Uterus (tissue), 4 donors: ENCODE measurements at regions of chr2 and their contacts with region 1.

Region 1: DNA sequence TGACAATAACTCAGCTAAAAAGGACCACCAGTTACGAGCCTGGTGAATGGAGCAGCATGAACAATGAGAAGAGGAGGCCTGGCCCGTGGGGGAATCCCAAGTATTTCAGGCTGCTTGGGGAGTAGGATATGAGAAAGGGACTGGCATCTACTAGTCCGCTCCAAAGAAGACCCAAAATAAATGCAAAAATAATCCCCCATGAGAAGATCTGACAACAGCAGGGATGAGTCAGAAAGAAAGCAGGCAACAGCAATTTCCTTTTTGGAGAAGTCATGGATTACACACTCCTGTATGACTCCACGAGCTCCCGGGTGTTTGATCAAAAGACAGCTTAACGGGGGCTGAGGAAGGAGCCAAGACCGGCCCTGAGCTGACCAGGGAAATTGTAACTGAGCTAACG is 111.4 kb downstream of the SOX11 start:
- DNase-seq: no peak
- H3K4me3 ChIP-seq: no peak overlapping the region
- H3K27ac ChIP-seq: no peak overlapping the region
- H3K4me1 ChIP-seq: no peaks in the 10 kb centered on the region
- H3K27me3 ChIP-seq: no peaks in the 10 kb centered on the region
- CTCF ChIP-seq: no peak
- POLR2A ChIP-seq: no peak

Region 2: DNA sequence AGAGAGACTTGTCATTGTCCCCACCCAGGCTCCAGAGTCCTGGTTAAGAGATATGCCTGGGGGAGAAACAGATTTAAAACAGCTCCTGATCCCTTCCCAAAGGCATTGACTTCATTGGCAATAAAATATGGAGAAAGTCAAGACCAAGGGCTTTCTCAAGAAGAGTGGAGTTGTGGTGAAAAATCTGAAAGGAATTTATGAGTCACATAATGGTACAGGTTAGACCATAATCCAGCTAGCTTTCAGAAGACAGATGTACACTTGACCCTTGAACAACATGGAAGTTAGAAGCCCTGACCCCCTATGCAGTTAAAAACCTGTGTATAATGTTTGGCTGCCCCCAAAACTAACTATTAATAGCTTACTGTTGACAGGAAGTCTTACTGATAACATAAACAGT is 710.5 kb before region 1 on chr2:
- intact Hi-C with region 1: loop called (anchors 10 kb)
- DNase-seq: no peak
- H3K4me3 ChIP-seq: no peak overlapping the region
- H3K27ac ChIP-seq: no peak overlapping the region
- H3K4me1 ChIP-seq: no peaks in the 10 kb centered on the region
- H3K27me3 ChIP-seq: no peaks in the 10 kb centered on the region
- CTCF ChIP-seq: no peak
- POLR2A ChIP-seq: no peak

Region 3: GRCh38 chr2:5304640-5305039 is 498.9 kb before region 1 on chr2:
- intact Hi-C with region 1: no loop called
- DNase-seq: no peak
- H3K4me3 ChIP-seq: no peak overlapping the region
- H3K27ac ChIP-seq: no peak overlapping the region
- H3K4me1 ChIP-seq: no peaks in the 10 kb centered on the region
- H3K27me3 ChIP-seq: no peaks in the 10 kb centered on the region
- CTCF ChIP-seq: no peak
- POLR2A ChIP-seq: no peak